ENCODE measurements at regions of chr17 and their contacts with region 1.

Region 1: GRCh38 chr17:628089-628941 is 86.3 kb downstream of the VPS53 start:
- DNase-seq: no peak
- H3K4me3 Mint-ChIP-seq: no peak overlapping the region
- H3K27ac Mint-ChIP-seq: peak overlapping the region; percentile 37
- H3K4me1 Mint-ChIP-seq: peaks cover 7% of the 10 kb centered on the region
- H3K27me3 Mint-ChIP-seq: no peaks in the 10 kb centered on the region

Region 2: DNA sequence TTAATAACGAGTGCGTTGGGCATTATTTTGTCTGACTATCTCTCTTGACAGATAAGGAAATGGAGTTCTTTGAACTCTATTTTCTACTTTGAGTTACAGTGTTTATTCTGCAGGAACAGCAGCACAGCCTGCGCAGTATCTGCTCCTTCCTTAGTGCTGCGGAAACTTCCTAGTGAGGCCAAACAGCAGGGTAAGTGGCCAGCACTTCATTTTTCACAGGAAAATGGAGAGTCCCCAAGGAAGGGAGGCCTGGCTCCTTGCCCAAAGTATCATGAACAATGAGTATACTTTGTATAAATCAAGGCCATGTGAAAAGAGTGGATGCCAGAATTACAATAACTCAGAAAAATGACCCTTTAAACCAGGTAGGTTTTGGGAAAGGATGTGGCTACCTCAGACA is 54.3 kb before region 1 on chr17:
- intact Hi-C with region 1: loop called (anchors 5 kb)
- DNase-seq: no peak
- H3K4me3 Mint-ChIP-seq: no peak overlapping the region
- H3K27ac Mint-ChIP-seq: no peak overlapping the region
- H3K4me1 Mint-ChIP-seq: peaks cover 3% of the 10 kb centered on the region
- H3K27me3 Mint-ChIP-seq: no peaks in the 10 kb centered on the region

Region 3: GRCh38 chr17:681738-682529 is 53.6 kb after region 1 on chr17:
- intact Hi-C with region 1: no loop called
- DNase-seq: no peak
- H3K4me3 Mint-ChIP-seq: no peak overlapping the region
- H3K27ac Mint-ChIP-seq: peak overlapping the region; percentile 1
- H3K4me1 Mint-ChIP-seq: peaks cover 19% of the 10 kb centered on the region
- H3K27me3 Mint-ChIP-seq: no peaks in the 10 kb centered on the region

Region 4: GRCh38 chr17:794876-795275 is 166.6 kb after region 1 on chr17:
- intact Hi-C with region 1: no loop called
- DNase-seq: no peak
- H3K4me3 Mint-ChIP-seq: no peak overlapping the region
- H3K27ac Mint-ChIP-seq: no peak overlapping the region
- H3K4me1 Mint-ChIP-seq: peaks cover 4% of the 10 kb centered on the region
- H3K27me3 Mint-ChIP-seq: no peaks in the 10 kb centered on the region